ENCODE measurements at regions of chr11 and their contacts with region 1.

Region 1: DNA sequence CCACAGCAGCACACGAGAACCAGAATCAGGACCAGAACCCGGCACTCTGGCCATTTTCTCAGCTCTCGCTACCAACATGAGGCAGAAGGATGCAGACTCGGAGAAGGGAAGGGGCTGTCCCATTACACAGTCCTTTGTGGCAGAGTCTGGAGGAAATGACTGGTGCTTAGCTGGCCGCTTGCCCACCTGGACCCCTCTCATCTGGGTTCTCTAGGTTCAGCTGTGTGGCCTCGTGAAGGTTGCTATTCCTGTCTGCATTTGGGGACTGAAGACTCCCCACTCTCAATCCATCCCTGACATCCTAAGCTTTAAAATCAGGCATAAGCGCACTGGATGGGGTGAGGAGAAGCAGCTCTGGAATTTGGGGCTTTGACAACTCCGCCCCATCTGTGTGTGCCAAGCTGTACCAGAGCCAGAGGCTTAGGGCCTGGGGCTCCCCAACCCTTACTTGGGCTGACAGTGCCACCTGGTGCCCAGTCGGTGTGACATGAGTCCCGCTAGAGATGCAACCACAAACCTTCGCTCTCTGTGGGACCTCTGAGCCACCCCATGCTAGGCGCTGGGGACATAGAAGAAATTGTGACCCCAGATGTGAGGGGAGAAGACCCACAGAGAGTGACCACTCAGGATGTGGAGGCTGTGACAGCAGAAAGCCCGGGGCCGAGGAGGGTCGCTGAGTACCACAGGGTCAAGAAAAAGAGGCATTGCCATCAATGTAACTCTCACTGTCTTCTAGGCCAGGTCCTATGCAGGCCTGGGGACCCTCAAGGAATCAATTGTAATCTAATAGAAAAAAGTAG is 35.9 kb upstream of the FCHSD2 start:
- DNase-seq: peak; percentile 85 to 91 (median 89)
- ATAC-seq: peak; percentile 49 to 77 (median 65)
- H3K4me3 ChIP-seq: no peak overlapping the region
- H3K27ac ChIP-seq: peak overlapping the region; percentile 53 to 95 (median 83)
- H3K4me1 ChIP-seq: peaks cover 16 to 76% (median 44%) of the 10 kb centered on the region in 12 donors
- H3K27me3 ChIP-seq: no peaks in the 10 kb centered on the region
- CTCF ChIP-seq: peak; percentile 68 to 90 (median 83)
- POLR2A ChIP-seq: no peak

Region 2: GRCh38 chr11:72743321-72744221 is 434.4 kb before region 1 on chr11:
- intact Hi-C with region 1: loop called in 1 of 10 experiments (anchors 5 kb)
- DNase-seq: peak in 2 of 5 donors; percentile 19 to 44
- ATAC-seq: no peak
- H3K4me3 ChIP-seq: no peak overlapping the region
- H3K27ac ChIP-seq: no peak overlapping the region
- H3K4me1 ChIP-seq: peaks cover 0 to 63% (median 17%) of the 10 kb centered on the region in 12 donors
- H3K27me3 ChIP-seq: no peaks in the 10 kb centered on the region
- CTCF ChIP-seq: no peak
- POLR2A ChIP-seq: no peak

Region 3: DNA sequence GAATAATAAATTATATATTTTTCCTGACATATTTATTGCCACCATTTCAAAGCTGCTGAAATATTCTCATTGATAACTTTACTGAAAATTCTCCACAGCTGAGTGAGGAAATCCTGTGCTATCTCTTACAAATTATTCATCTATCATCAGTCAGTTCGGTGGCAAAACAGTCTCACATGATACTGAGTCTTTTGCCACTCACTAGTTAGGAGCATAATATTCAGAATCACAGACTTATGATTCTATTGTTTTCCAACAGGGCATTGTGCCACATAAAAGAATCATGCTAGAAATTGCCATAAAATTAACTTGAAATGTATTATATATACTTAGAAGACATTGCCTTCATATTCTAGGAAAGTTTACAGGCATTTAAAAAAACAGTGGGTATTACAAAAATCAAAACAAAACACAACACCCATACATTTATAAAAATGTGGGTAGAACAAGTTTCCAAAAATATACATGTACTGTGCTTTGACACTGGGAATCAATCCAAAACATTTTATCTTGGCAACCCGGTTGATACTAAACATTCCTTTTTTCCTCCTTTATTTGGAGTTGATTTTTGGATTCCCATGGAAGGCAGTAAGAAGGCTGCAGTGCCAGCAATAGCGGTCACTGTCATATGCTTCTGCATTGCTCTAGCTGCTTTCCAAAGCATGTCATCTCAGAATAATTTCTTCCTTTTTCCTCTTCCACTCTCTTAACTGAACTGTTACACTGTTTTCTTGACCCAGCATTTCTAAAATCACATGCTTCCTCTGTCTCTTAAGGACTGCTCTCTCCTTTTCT is 321.2 kb before region 1 on chr11:
- intact Hi-C with region 1: loop called in 1 of 10 experiments (anchors 5 kb)
- DNase-seq: no peak
- ATAC-seq: peak; percentile 56 to 72 (median 62)
- H3K4me3 ChIP-seq: no peak overlapping the region
- H3K27ac ChIP-seq: peak overlapping the region; percentile 5 to 74 (median 52)
- H3K4me1 ChIP-seq: peaks cover 0 to 25% (median 19%) of the 10 kb centered on the region in 12 donors
- H3K27me3 ChIP-seq: no peaks in the 10 kb centered on the region
- CTCF ChIP-seq: peak in 5 of 12 donors; percentile 8 to 41 (median 21)
- POLR2A ChIP-seq: no peak

Region 4: GRCh38 chr11:73141848-73142286 is 36.1 kb before region 1 on chr11:
- intact Hi-C with region 1: loop called in 8 of 10 experiments (anchors 1 to 5 kb)
- DNase-seq: peak; percentile 80 to 90 (median 84)
- ATAC-seq: peak in 3 of 4 donors; percentile 38 to 65 (median 53)
- H3K4me3 ChIP-seq: peak overlapping the region; percentile 65 to 97 (median 92)
- H3K27ac ChIP-seq: peak overlapping the region; percentile 91 to 99 (median 98)
- H3K4me1 ChIP-seq: peaks cover 2 to 66% (median 44%) of the 10 kb centered on the region in 12 donors
- H3K27me3 ChIP-seq: no peaks in the 10 kb centered on the region
- CTCF ChIP-seq: no peak
- POLR2A ChIP-seq: peak in 1 of 2 donors; percentile 48